CD14-positive monocyte (primary cell): ENCODE measurements at regions of chr20 and their contacts with region 1.

Region 1: DNA sequence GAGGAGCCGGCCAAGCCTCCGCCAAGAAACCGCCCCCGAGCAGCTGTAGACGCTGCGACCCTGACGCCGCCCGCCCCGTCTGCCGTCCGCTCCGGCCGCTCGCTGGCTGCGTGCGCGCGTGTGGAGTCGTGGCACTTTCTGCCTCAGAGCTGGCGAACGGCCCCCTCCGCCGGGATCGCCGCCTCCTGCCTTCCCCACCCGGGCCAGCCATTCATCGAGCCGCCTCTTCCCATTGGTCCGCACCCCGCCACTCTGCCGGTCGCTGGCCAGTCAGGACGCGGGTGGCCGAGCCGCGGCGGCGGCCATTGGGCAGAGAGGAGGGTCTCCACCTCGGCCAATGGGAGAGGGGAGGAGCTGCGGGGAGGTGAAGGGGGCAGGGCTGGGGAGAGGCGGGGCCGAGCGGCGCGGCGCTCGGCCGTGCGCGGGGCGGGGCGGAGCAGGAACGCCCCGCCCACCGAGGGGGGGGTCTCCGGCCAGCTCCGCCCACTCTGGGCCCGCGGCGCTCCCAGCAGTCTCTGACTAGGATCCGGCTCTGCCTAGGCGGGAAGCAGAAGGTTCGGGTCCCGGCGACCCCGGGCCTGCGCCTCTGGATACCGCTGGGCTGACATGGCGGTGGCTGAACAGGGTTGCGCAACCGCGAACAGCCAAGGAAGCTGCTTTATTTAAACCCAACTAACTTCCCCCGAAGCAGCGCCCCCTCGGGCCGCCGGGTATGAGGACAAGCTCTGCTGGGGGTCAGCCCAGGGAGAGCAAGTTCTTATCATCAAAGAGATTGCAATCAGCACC is at the start of gene RRBP1:
- DNase-seq: peak; percentile 95 to 97 (median 97)
- H3K4me3 ChIP-seq: peak within 1 kb of the TSS; percentile 80 to 91 (median 90)
- H3K4me3 Mint-ChIP-seq: peak within 1 kb of the TSS; percentile 87 to 97
- H3K27ac ChIP-seq: peak within 1 kb of the TSS; percentile 67 to 88
- H3K27ac Mint-ChIP-seq: peak within 1 kb of the TSS; percentile 82 to 95 (median 92)
- H3K4me1 ChIP-seq: peaks cover 19 to 22% of the 10 kb centered on the region in 2 donors
- H3K4me1 Mint-ChIP-seq: peaks cover 27% of the 10 kb centered on the region
- H3K27me3 ChIP-seq: no peaks in the 10 kb centered on the region
- H3K27me3 Mint-ChIP-seq: peaks cover 5 to 11% (median 7%) of the 10 kb centered on the region in 3 donors
- CTCF ChIP-seq: peak; percentile 97
- polyA plus RNA-seq, gene RRBP1: 4.7 to 22.2 (median 7.5) TPM

Region 2: GRCh38 chr20:17569616-17570346 is 112.5 kb before region 1 on chr20 and contains the start of gene DSTN:
- intact Hi-C with region 1: loop called in 1 of 2 experiments (anchors 10 kb)
- DNase-seq: peak; percentile 76 to 83 (median 82)
- H3K4me3 ChIP-seq: peak within 1 kb of the TSS; percentile 74 to 95 (median 81)
- H3K4me3 Mint-ChIP-seq: peak within 1 kb of the TSS; percentile 88 to 94
- H3K27ac ChIP-seq: peak within 1 kb of the TSS in 1 of 2 donors; percentile 52
- H3K27ac Mint-ChIP-seq: peak within 1 kb of the TSS; percentile 74 to 93 (median 89)
- H3K4me1 ChIP-seq: peaks cover 13 to 20% of the 10 kb centered on the region in 2 donors
- H3K4me1 Mint-ChIP-seq: peaks cover 13% of the 10 kb centered on the region
- H3K27me3 ChIP-seq: peaks cover 11 to 15% of the 10 kb centered on the region in 2 donors
- H3K27me3 Mint-ChIP-seq: peaks cover 23 to 32% (median 26%) of the 10 kb centered on the region in 3 donors
- CTCF ChIP-seq: no peak
- polyA plus RNA-seq, gene DSTN: 15.6 to 63.8 (median 58.4) TPM

Region 3: DNA sequence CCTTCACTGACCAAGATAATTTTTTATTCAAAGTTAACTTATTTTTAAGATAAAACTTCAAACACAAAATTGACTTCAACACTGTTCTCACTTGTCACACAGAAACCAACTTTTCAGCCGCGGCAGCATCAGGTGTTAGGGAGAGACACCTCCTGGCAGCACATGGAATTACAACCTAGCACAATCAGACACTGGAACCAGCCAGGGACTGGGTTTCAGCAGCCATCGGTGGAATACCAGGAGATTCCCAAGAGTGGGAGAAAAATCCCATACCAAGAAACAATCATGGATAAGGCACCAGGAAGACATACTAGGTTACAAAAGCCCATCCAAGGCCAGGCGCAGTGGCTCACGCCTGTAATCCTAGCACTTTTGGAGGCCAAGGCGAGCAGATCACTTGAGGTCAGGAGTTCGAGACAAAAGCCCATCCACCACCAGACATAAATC is 216.3 kb after region 1 on chr20:
- intact Hi-C with region 1: loop called in 1 of 2 experiments (anchors 10 kb)
- DNase-seq: peak; percentile 30 to 61 (median 45)
- H3K4me3 ChIP-seq: no peak overlapping the region
- H3K4me3 Mint-ChIP-seq: no peak overlapping the region
- H3K27ac ChIP-seq: no peak overlapping the region
- H3K27ac Mint-ChIP-seq: no peak overlapping the region
- H3K4me1 ChIP-seq: peaks cover 13 to 15% of the 10 kb centered on the region in 2 donors
- H3K4me1 Mint-ChIP-seq: peaks cover 22% of the 10 kb centered on the region
- H3K27me3 ChIP-seq: peaks cover 18 to 20% of the 10 kb centered on the region in 2 donors
- H3K27me3 Mint-ChIP-seq: peaks cover 15 to 32% (median 16%) of the 10 kb centered on the region in 3 donors
- CTCF ChIP-seq: peak; percentile 94

Region 4: GRCh38 chr20:17968366-17969279 is 286.3 kb after region 1 on chr20 and contains the starts of genes MGME1 and SNX5:
- intact Hi-C with region 1: loop called (anchors 5 kb)
- DNase-seq: peak; percentile 98 to 99 (median 99)
- H3K4me3 ChIP-seq: peak within 1 kb of the TSS; percentile 83 to 93 (median 92)
- H3K4me3 Mint-ChIP-seq: peak within 1 kb of the TSS; percentile 88 to 99
- H3K27ac ChIP-seq: peak within 1 kb of the TSS; percentile 93 to 97
- H3K27ac Mint-ChIP-seq: peak within 1 kb of the TSS; percentile 97 to 100 (median 99)
- H3K4me1 ChIP-seq: peaks cover 74 to 94% of the 10 kb centered on the region in 2 donors
- H3K4me1 Mint-ChIP-seq: peaks cover 75% of the 10 kb centered on the region
- H3K27me3 ChIP-seq: no peaks in the 10 kb centered on the region
- H3K27me3 Mint-ChIP-seq: no peaks in the 10 kb centered on the region
- CTCF ChIP-seq: no peak
- polyA plus RNA-seq, gene MGME1: 2.5 to 20.1 (median 13.4) TPM
- polyA plus RNA-seq, gene SNX5: 55.6 to 83.8 (median 66.1) TPM